Activated T-helper 1 cell treated with anti-CD3 and anti-CD28 coated beads, Interleukin-12 subunit alpha, Interleukin-12 subunit beta, Interleukin-2, Interleukin-4 antibody, amounts not matched to agents 30 ng/mL and 10 ng/mL and 1 ng/mL, durations not matched to agents 14 hours and 24 hours and 36 hours (primary cell): ENCODE measurements at regions of chr4 and their contacts with region 1.

Region 1: GRCh38 chr4:113761620-113762185 is at the start of gene CAMK2D:
- DNase-seq: peak; percentile 79
- H3K4me3 Mint-ChIP-seq: peak within 1 kb of the TSS; percentile 100
- H3K27ac Mint-ChIP-seq: peak within 1 kb of the TSS; percentile 100
- H3K4me1 Mint-ChIP-seq: peaks cover 44% of the 10 kb centered on the region
- H3K27me3 Mint-ChIP-seq: no peaks in the 10 kb centered on the region
- total RNA-seq, gene CAMK2D: 67.7 and 73.5 TPM in 2 replicates

Region 2: DNA sequence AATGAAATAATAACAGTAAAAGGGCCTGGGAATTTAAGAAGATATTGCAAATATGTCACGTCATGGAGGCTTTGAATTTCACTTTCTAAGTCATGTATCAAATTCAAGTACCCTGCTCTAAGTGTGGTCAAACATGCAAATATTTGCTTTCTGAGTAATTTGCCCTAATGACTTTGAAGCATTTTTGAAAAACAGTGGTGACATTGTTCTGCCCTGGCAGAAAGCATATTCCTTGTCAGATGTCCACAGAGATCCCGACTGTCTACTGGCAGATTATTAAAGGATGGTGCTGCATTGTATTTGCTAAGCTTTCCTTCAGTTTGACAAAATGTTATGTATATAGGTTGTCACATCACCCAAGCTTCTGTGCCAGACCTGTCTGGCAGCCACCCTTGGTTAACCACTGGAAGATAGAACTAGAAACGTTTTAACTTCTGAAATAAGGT is 619.8 kb before region 1 on chr4:
- intact Hi-C with region 1: loop called (anchors 2 kb)
- DNase-seq: no peak
- H3K4me3 Mint-ChIP-seq: no peak overlapping the region
- H3K27ac Mint-ChIP-seq: no peak overlapping the region
- H3K4me1 Mint-ChIP-seq: peaks cover 20% of the 10 kb centered on the region
- H3K27me3 Mint-ChIP-seq: peaks cover 9% of the 10 kb centered on the region

Region 3: DNA sequence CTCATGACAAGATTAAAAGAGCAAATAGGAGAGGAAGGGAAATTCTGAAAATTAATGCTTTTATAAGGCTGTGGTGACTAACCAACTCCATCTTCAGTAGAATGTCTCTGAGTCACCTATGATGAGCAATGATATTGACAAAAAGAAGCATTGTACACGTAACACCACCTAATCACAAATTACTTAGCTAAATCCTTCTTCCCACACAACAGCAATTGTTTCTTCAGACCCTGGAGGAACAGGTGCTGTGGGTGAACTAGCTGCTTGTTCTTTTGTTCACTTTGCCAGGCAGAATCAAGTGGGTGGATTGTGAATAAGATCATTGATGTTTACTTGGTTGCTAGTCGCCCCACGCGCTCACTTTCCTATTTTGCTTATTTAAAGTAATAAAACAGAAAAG is 315.7 kb before region 1 on chr4:
- intact Hi-C with region 1: loop called (anchors 1 kb)
- DNase-seq: no peak
- H3K4me3 Mint-ChIP-seq: no peak overlapping the region
- H3K27ac Mint-ChIP-seq: peak overlapping the region; percentile 54
- H3K4me1 Mint-ChIP-seq: peaks cover 24% of the 10 kb centered on the region
- H3K27me3 Mint-ChIP-seq: no peaks in the 10 kb centered on the region

Region 4: DNA sequence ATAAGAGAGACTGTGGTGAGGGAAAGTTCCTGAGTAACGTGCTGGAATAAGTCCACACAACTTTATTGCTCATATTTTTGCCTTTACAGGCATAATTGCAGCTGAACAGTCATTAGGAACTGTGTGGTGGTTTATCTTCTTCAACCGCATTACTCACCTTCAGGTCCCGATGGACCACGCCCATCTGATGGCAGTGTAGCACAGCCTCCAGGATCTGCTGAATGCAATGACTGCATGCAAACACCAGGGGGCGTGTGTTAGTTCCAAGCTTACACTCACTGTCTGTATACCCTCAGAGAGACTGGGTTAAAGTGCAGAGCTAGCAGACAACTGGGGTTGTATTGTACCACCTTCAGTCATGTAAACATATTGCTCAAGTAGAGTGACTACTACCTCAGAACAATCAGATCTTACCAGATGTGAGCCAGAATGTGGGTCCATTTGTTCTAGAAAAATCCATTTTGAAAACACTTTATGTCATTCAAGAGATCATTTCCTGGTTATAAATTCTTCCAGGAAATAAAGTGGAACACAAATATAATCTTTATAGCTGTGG is 214.1 kb before region 1 on chr4:
- intact Hi-C with region 1: loop called (anchors 1 kb)
- DNase-seq: peak; percentile 87
- H3K4me3 Mint-ChIP-seq: no peak overlapping the region
- H3K27ac Mint-ChIP-seq: peak overlapping the region; percentile 49
- H3K4me1 Mint-ChIP-seq: peaks cover 30% of the 10 kb centered on the region
- H3K27me3 Mint-ChIP-seq: no peaks in the 10 kb centered on the region

Region 5: DNA sequence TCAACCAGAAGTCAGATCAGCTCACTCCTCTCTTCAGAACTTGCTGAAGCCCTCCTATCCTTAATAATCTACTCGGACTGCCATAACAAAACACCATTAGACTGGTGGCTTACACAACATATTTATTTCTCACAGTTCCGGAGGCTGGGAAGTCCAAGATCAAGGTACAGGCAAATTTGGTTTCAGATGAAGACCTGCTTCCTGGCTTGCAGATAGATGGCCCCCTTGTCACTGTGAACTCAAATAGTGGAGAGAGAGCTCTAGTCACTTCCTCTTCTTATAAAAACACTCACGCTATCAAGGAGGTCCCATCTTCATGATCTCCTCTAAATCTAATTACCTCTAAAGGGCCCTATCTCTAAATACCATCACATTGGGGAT is 125.3 kb before region 1 on chr4:
- intact Hi-C with region 1: loop called (anchors 2 kb)
- DNase-seq: no peak
- H3K4me3 Mint-ChIP-seq: peak overlapping the region; percentile 64
- H3K27ac Mint-ChIP-seq: peak overlapping the region; percentile 87
- H3K4me1 Mint-ChIP-seq: peaks cover 54% of the 10 kb centered on the region
- H3K27me3 Mint-ChIP-seq: no peaks in the 10 kb centered on the region

Region 6: DNA sequence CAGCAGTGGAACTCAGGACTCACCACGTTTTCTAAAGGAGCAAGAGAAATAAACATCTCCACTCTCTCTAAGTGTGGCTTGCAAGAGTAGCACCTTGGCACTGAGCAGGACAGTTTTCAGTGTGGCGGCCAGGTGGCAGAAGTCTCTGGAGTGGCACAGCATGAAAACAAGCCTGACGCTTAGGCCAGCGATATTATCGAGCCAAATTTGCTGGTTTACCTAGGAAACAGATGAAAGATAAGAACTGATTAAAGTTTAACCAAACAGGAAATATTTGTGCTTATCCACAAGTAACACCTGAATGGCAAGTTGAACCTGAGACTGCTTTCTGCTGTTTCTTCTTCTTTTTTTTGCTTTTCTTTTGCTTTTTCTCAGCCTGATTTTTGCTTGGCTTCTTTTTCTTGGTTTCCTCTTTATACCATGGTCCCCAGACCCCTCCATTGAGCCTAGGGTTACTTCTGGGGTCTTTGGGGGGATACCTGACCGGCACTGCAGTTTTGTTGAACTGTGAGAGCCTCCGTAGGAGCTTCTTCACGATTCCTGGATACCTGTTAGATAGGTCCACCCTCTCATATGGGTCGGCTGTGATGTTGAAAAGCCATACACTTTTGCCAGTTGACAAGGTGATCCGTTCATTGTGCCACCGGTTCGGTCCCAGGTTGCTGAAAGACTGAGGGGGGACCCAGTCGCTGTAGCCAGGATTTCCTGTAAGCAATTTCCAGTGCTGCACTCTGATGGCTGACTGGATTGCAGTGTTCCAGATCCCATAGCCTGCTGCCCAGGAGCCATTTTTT is 140.5 kb after region 1 on chr4:
- intact Hi-C with region 1: loop called (anchors 1 kb)
- DNase-seq: peak; percentile 10
- H3K4me3 Mint-ChIP-seq: peak overlapping the region; percentile 22
- H3K27ac Mint-ChIP-seq: no peak overlapping the region
- H3K4me1 Mint-ChIP-seq: peaks cover 36% of the 10 kb centered on the region
- H3K27me3 Mint-ChIP-seq: no peaks in the 10 kb centered on the region

Region 7: DNA sequence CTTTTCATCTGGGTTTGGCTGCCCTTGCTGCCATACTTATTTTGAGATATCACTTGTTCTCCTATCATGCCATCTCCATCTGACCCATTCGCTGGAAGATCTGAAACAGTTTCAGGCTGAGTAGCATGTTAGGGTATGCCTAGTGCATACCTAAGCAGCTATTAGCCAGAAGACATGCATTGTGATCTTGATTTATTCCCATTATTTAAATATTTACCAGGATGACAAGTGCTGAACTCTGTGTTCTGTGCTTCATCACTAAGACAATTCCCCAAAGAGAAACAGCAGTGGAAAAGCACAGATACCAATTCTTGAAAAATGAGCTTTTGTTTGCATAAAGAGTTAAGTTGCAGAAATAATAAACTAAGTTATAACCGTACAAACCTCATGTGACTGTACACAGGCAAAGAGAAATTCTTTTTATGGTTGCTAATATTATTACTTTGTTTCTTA is 488.8 kb after region 1 on chr4:
- intact Hi-C with region 1: no loop called
- DNase-seq: no peak
- H3K4me3 Mint-ChIP-seq: no peak overlapping the region
- H3K27ac Mint-ChIP-seq: no peak overlapping the region
- H3K4me1 Mint-ChIP-seq: no peaks in the 10 kb centered on the region
- H3K27me3 Mint-ChIP-seq: peaks cover 3% of the 10 kb centered on the region